ENCODE measurements at regions of chr10 and their contacts with region 1.

Region 1: DNA sequence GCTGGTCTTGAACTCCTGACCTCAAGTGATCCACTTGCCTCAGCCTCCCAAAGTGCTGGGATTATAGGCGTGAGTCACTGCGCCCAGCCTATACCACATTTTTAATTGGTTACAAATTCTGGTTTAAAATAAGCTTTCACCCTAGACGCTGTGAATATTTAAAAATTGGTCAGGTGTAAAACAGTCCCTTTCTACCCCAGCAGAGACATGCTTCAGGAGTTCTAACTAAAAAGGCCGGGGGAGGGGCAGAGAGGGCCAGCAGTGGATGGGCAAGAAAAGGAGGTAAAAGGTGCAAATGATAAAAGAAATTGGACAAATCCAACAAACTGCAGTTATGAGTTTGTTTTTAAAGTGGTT is 70.0 kb downstream of the WAPL start:
- DNase-seq: no peak
- ATAC-seq: no peak
- H3K4me3 ChIP-seq: no peak overlapping the region
- H3K4me3 Mint-ChIP-seq: no peak overlapping the region
- H3K27ac ChIP-seq: no peak overlapping the region
- H3K27ac Mint-ChIP-seq: peak overlapping the region in 6 of 9 donors; percentile 5 to 38 (median 22)
- H3K4me1 ChIP-seq: no peaks in the 10 kb centered on the region
- H3K4me1 Mint-ChIP-seq: peaks cover 15 to 45% (median 34%) of the 10 kb centered on the region in 7 donors
- H3K27me3 ChIP-seq: no peaks in the 10 kb centered on the region
- H3K27me3 Mint-ChIP-seq: no peaks in the 10 kb centered on the region

Region 2: DNA sequence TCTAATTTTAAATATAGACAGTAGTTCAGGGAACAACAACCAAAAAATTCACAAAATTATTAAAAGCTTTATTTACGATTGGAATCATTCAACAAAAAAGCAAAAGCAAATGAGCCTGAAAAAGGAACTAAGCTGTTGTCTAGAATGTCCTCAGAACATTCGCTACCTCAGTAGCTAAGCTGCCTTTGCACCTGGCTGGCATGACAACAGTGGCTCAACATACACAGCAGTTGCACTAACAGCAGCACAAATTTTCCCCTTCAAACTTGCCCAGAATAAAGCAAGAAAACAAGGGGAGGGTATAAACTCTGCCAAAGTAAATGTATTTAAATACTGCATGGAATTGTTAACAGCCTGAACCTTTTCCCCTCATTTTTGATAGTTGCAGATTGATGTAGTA is 14.6 kb before region 1 on chr10:
- CTCF ChIA-PET with region 1: no interaction called
- POLR2A ChIA-PET with region 1: no interaction called
- intact Hi-C with region 1: no loop called
- DNase-seq: no peak
- ATAC-seq: no peak
- H3K4me3 ChIP-seq: no peak overlapping the region
- H3K4me3 Mint-ChIP-seq: no peak overlapping the region
- H3K27ac ChIP-seq: no peak overlapping the region
- H3K27ac Mint-ChIP-seq: peak overlapping the region in 1 of 9 donors; percentile 15
- H3K4me1 ChIP-seq: no peaks in the 10 kb centered on the region
- H3K4me1 Mint-ChIP-seq: peaks cover 11 to 25% (median 23%) of the 10 kb centered on the region in 7 donors
- H3K27me3 ChIP-seq: no peaks in the 10 kb centered on the region
- H3K27me3 Mint-ChIP-seq: no peaks in the 10 kb centered on the region

Region 3: GRCh38 chr10:86497621-86498020 is 46.0 kb after region 1 on chr10:
- CTCF ChIA-PET with region 1: no interaction called
- POLR2A ChIA-PET with region 1: no interaction called
- intact Hi-C with region 1: loop called in 1 of 2 experiments (anchors 5 kb)
- DNase-seq: no peak
- ATAC-seq: no peak
- H3K4me3 ChIP-seq: no peak overlapping the region
- H3K4me3 Mint-ChIP-seq: no peak overlapping the region
- H3K27ac ChIP-seq: no peak overlapping the region
- H3K27ac Mint-ChIP-seq: peak overlapping the region in 4 of 9 donors; percentile 15 to 53 (median 44)
- H3K4me1 ChIP-seq: peaks cover 0 to 8% of the 10 kb centered on the region in 2 donors
- H3K4me1 Mint-ChIP-seq: peaks cover 28 to 82% (median 65%) of the 10 kb centered on the region in 7 donors
- H3K27me3 ChIP-seq: no peaks in the 10 kb centered on the region
- H3K27me3 Mint-ChIP-seq: no peaks in the 10 kb centered on the region

Region 4: GRCh38 chr10:86512137-86512536 is 60.6 kb after region 1 on chr10:
- CTCF ChIA-PET with region 1: no interaction called
- POLR2A ChIA-PET with region 1: no interaction called
- intact Hi-C with region 1: no loop called
- DNase-seq: no peak
- ATAC-seq: no peak
- H3K4me3 ChIP-seq: no peak overlapping the region
- H3K4me3 Mint-ChIP-seq: peak overlapping the region in 8 of 10 donors; percentile 14 to 72 (median 46)
- H3K27ac ChIP-seq: no peak overlapping the region
- H3K27ac Mint-ChIP-seq: peak overlapping the region in 8 of 9 donors; percentile 1 to 60 (median 20)
- H3K4me1 ChIP-seq: peaks cover 18 to 29% of the 10 kb centered on the region in 2 donors
- H3K4me1 Mint-ChIP-seq: peaks cover 41 to 65% (median 50%) of the 10 kb centered on the region in 7 donors
- H3K27me3 ChIP-seq: no peaks in the 10 kb centered on the region
- H3K27me3 Mint-ChIP-seq: no peaks in the 10 kb centered on the region

Region 5: DNA sequence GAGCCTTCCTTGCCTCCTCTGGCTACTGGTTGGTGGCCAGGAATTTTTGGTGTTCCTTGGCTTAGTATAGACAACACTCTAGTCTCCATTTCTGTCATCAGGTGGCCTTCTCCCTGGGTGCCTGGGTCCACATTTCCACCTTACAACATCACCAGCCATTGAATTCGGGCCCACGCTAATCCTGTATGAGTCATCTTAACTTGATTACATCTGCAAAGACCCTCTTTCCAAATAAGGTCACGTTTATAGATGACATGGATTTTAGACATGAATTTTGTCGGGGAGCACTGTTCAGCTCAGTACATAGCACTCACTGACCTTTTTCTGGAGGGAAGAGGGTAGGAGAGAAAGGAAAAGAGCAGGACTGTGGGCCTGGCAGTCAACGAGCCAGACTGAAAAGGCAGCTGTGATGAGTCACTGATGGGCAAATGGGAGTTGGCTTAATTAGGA is 466.5 kb after region 1 on chr10:
- CTCF ChIA-PET with region 1: no interaction called
- POLR2A ChIA-PET with region 1: no interaction called
- intact Hi-C with region 1: no loop called
- DNase-seq: no peak
- ATAC-seq: no peak
- H3K4me3 ChIP-seq: no peak overlapping the region
- H3K4me3 Mint-ChIP-seq: no peak overlapping the region
- H3K27ac ChIP-seq: no peak overlapping the region
- H3K27ac Mint-ChIP-seq: no peak overlapping the region
- H3K4me1 ChIP-seq: no peaks in the 10 kb centered on the region
- H3K4me1 Mint-ChIP-seq: no peaks in the 10 kb centered on the region
- H3K27me3 ChIP-seq: no peaks in the 10 kb centered on the region
- H3K27me3 Mint-ChIP-seq: no peaks in the 10 kb centered on the region